WTC11 (cell line): ENCODE measurements at regions of chr7 and their contacts with region 1.

Region 1: DNA sequence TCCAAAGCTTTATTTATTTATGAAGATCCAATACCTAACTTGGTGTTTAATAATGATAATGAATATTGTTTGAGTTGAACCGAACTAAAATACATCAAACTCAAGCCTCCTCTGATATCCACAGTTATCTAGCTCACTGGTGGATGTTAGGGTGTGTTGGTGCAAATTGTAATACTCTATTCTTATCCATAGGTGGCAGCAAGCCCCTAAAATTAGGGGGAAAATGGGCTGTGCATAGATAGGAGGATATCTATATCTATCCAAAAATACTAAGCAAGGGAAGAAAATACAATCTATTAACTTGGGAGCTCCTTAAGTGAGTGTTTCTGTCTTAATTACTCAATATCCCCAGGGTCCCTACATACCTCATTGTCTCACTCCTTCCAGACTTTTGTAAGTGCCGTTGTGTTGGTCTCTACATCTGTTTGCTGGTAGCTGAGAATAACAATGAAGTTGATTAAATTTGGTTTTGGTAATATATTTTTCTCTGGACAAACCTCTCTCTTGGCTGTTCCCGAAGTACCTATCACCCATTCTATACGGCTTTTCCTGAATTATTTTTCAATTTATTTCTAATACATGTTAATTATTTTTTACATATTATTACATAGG is 55.0 kb upstream of the VWDE start:
- DNase-seq: no peak
- ATAC-seq: peak; percentile 96
- H3K4me3 Mint-ChIP-seq: no peak overlapping the region
- H3K27ac Mint-ChIP-seq: no peak overlapping the region
- H3K4me1 Mint-ChIP-seq: no peaks in the 10 kb centered on the region
- H3K27me3 Mint-ChIP-seq: no peaks in the 10 kb centered on the region
- CTCF ChIP-seq: peak; percentile 70; the same call in 1 of the 2 replicates

Region 2: DNA sequence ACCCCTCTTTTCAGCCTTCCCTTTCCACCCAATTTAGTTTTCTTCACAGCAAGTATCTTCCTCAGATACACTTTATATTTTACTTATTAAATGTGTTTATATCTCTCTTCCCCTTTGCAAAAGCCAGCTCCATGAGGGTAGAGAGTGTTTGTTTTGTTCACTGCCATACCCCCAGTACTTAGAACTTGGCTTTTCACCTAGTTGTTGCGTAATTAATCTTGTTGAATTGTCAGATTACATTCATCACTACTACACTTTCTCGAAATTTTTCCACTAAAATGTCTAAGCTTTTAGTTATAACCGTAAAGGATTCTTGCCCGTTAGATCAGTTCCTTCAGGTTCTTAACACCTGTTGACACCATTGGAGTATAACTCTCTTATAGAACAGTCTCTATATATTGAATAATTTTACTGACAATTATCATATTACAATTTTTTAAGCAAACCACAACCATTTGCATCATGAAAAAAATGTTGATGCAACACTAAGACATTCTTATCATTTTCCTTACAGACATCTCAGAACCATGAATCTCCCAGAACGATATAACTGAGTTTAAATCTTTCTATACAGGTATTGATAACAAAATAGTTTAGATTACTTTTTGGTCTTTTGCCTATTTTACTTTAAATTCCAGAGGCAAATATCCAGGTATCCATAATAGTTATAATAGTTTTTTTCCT is 84.9 kb before region 1 on chr7:
- CTCF ChIA-PET with region 1: no interaction called
- POLR2A ChIA-PET with region 1: no interaction called
- DNase-seq: no peak
- ATAC-seq: no peak
- H3K4me3 Mint-ChIP-seq: no peak overlapping the region
- H3K27ac Mint-ChIP-seq: peak overlapping the region; percentile 25; the same call in 1 of the 2 replicates
- H3K4me1 Mint-ChIP-seq: no peaks in the 10 kb centered on the region
- H3K27me3 Mint-ChIP-seq: no peaks in the 10 kb centered on the region
- CTCF ChIP-seq: no peak

Region 3: GRCh38 chr7:12436896-12437535 is 21.6 kb before region 1 on chr7:
- CTCF ChIA-PET with region 1: interaction called, 52 read pairs
- POLR2A ChIA-PET with region 1: interaction called, 3 read pairs
- DNase-seq: peak; percentile 51
- ATAC-seq: peak; percentile 91
- H3K4me3 Mint-ChIP-seq: no peak overlapping the region
- H3K27ac Mint-ChIP-seq: no peak overlapping the region
- H3K4me1 Mint-ChIP-seq: peaks cover 27% of the 10 kb centered on the region
- H3K27me3 Mint-ChIP-seq: no peaks in the 10 kb centered on the region; the same call in 1 of the 2 replicates
- CTCF ChIP-seq: no peak

Region 4: DNA sequence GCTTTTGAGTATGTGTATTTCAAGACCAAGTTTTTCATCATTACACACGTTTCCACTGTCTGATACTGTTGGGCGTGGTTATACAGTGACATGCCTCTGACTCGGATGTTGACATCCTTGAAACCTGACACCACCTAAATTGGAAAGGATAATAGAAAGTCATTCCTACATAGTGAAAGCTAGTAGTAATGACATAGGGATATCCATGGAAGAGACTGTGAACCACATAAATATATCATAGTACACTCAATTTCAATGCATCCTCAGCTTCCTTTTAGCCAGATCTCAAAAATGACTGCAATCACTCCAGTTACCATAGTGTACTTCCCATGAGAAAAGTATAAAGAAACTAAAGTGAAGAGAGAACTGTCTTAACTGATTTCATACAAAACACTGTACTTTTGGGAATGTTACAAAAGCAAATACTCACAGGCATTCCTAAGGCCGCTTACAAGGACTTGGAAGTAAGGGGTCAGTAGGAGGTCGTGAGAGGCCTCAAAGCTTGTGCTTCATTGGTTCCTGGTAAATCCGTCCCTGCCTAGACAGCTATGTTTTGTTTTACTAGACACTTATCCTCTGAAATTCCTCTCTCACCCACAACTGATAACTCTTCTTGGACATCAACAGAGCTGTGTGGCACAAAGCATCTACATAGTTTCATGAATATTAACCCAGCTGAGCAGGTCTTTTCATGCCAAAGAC is 16.9 kb after region 1 on chr7:
- CTCF ChIA-PET with region 1: interaction called, 39 read pairs
- POLR2A ChIA-PET with region 1: no interaction called
- DNase-seq: no peak
- ATAC-seq: peak; percentile 71
- H3K4me3 Mint-ChIP-seq: no peak overlapping the region
- H3K27ac Mint-ChIP-seq: no peak overlapping the region
- H3K4me1 Mint-ChIP-seq: peaks cover 8% of the 10 kb centered on the region
- H3K27me3 Mint-ChIP-seq: no peaks in the 10 kb centered on the region
- CTCF ChIP-seq: no peak

Region 5: DNA sequence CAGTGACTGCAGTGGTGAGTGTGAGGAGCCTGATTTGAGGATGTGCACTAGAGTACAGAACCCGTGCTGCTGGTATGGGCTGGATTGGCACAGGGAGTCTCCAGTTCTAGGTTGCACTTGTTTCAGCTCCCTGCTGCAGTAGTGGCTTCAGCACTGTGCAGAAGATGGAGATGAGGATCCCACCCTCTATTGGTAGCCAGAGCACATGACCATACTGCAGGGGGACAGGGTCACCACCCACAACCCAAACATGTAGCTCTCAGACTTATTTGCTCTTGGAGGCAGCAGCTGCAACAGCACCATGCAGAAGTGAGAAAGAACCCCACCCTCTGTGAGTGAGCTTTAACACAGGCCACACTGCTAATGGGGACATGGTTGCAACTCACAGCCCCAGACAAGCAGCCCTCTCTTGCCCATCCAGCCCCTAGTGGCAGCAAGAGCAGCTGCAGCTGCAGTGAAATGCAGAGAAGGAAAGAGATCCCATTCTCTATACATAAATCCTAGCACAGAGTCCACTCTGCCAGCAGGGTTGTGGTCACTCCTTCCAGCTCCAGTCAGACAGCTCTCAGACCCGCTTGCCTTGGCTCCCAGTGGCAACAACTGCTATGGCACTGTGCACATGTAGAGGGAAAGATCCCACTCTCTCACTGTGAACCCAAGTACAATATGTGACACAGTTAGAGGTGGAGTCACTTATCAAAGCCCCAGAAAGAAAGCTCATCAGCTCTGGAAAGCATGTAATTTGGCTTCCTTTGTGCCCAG is 60.5 kb after region 1 on chr7:
- CTCF ChIA-PET with region 1: interaction called, 41 read pairs
- POLR2A ChIA-PET with region 1: interaction called, 4 read pairs
- DNase-seq: peak; percentile 68
- ATAC-seq: peak; percentile 98
- H3K4me3 Mint-ChIP-seq: no peak overlapping the region
- H3K27ac Mint-ChIP-seq: no peak overlapping the region
- H3K4me1 Mint-ChIP-seq: peaks cover 3% of the 10 kb centered on the region
- H3K27me3 Mint-ChIP-seq: peaks cover 5% of the 10 kb centered on the region; the same call in 1 of the 2 replicates
- CTCF ChIP-seq: peak; percentile 75

Region 6: GRCh38 chr7:12539681-12540080 is 81.1 kb after region 1 on chr7:
- CTCF ChIA-PET with region 1: no interaction called
- POLR2A ChIA-PET with region 1: no interaction called
- DNase-seq: no peak
- ATAC-seq: no peak
- H3K4me3 Mint-ChIP-seq: no peak overlapping the region
- H3K27ac Mint-ChIP-seq: no peak overlapping the region
- H3K4me1 Mint-ChIP-seq: no peaks in the 10 kb centered on the region
- H3K27me3 Mint-ChIP-seq: no peaks in the 10 kb centered on the region
- CTCF ChIP-seq: no peak

Region 7: GRCh38 chr7:12993025-12993424 is 534.4 kb after region 1 on chr7:
- CTCF ChIA-PET with region 1: no interaction called
- POLR2A ChIA-PET with region 1: no interaction called
- DNase-seq: no peak
- ATAC-seq: no peak
- H3K4me3 Mint-ChIP-seq: no peak overlapping the region
- H3K27ac Mint-ChIP-seq: no peak overlapping the region
- H3K4me1 Mint-ChIP-seq: peaks cover 4% of the 10 kb centered on the region
- H3K27me3 Mint-ChIP-seq: no peaks in the 10 kb centered on the region
- CTCF ChIP-seq: no peak